ENCODE measurements at regions of chr5 and their contacts with region 1.

Region 1: GRCh38 chr5:146586752-146587151 is 70.8 kb upstream of the GPR151 start:
- DNase-seq: no peak
- ATAC-seq: no peak
- H3K4me3 ChIP-seq: no peak overlapping the region
- H3K27ac ChIP-seq: no peak overlapping the region
- H3K4me1 ChIP-seq: no peaks in the 10 kb centered on the region
- H3K27me3 ChIP-seq: no peaks in the 10 kb centered on the region

Region 2: GRCh38 chr5:146541958-146542849 is 44.5 kb before region 1 on chr5:
- intact Hi-C with region 1: no loop called
- DNase-seq: peak; percentile 73 to 92
- ATAC-seq: peak; percentile 86
- H3K4me3 ChIP-seq: no peak overlapping the region
- H3K27ac ChIP-seq: no peak overlapping the region
- H3K4me1 ChIP-seq: no peaks in the 10 kb centered on the region
- H3K27me3 ChIP-seq: no peaks in the 10 kb centered on the region

Region 3: DNA sequence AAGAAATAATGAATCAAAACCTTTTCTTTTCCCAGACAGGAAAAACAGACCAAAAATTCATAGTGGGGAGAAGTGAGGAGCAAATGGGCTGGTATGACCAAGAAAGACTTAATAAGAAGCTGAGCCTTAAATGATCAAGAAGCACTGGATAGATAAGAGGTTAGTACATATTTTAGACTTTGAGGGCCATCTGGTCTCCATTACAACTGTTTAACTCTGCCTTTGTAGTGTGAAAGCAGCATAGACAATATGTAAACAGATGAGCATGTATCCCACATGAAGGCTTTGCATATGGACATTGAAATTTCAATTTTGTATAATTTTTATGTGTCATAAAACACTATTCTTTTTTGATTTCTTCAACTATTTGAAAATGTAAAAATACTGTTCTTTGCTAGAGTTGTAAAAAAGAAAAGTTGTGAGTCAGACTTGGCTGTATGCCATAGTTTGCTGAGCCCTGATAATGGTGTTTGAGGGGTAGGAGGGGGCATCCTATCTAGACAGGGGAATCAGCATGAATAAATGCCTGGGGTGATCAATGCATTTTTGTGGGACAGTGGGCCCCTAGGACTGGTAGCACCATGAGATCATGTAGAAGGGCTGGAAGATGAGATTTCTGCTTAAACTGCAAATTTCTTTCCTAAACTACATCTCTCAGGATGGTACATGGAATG is 21.0 kb after region 1 on chr5:
- intact Hi-C with region 1: loop called in 1 of 2 experiments (anchors 1 kb)
- DNase-seq: no peak
- ATAC-seq: no peak
- H3K4me3 ChIP-seq: no peak overlapping the region
- H3K27ac ChIP-seq: no peak overlapping the region
- H3K4me1 ChIP-seq: no peaks in the 10 kb centered on the region
- H3K27me3 ChIP-seq: no peaks in the 10 kb centered on the region

Measured in aorta (tissue), 5 donors.